Gastrocnemius medialis (tissue), 4 donors: ENCODE measurements at regions of chr14 and their contacts with region 1.

Region 1: GRCh38 chr14:104137297-104138097 is 890 bp upstream of the KIF26A start:
- DNase-seq: no peak
- ATAC-seq: peak; percentile 74 to 87
- H3K4me3 ChIP-seq: peak overlapping the region; percentile 52 to 61 (median 56)
- H3K27ac ChIP-seq: peak overlapping the region in 3 of 4 donors; percentile 44 to 59 (median 55)
- H3K4me1 ChIP-seq: peaks cover 13 to 25% of the 10 kb centered on the region in 2 donors
- H3K27me3 ChIP-seq: peaks cover 41 to 53% (median 46%) of the 10 kb centered on the region in 3 donors
- CTCF ChIP-seq: peak; percentile 67 to 91 (median 89)
- POLR2A ChIP-seq: no peak

Region 2: GRCh38 chr14:103801459-103801858 is 336.0 kb before region 1 on chr14:
- in situ Hi-C with region 1: no loop called
- intact Hi-C with region 1: no loop called
- DNase-seq: no peak
- ATAC-seq: no peak
- H3K4me3 ChIP-seq: no peak overlapping the region
- H3K27ac ChIP-seq: no peak overlapping the region
- H3K4me1 ChIP-seq: peaks cover 0 to 5% of the 10 kb centered on the region in 2 donors
- H3K27me3 ChIP-seq: no peaks in the 10 kb centered on the region
- CTCF ChIP-seq: no peak
- POLR2A ChIP-seq: no peak

Region 3: GRCh38 chr14:104171029-104171697 is 33.7 kb after region 1 on chr14:
- in situ Hi-C with region 1: no loop called
- intact Hi-C with region 1: no loop called
- DNase-seq: no peak
- ATAC-seq: no peak
- H3K4me3 ChIP-seq: no peak overlapping the region
- H3K27ac ChIP-seq: no peak overlapping the region
- H3K4me1 ChIP-seq: no peaks in the 10 kb centered on the region
- H3K27me3 ChIP-seq: peaks cover 0 to 20% (median 19%) of the 10 kb centered on the region in 3 donors
- CTCF ChIP-seq: no peak
- POLR2A ChIP-seq: no peak

Region 4: GRCh38 chr14:104563742-104564615 is 426.5 kb after region 1 on chr14:
- in situ Hi-C with region 1: loop called in 3 of 4 experiments (anchors 25 kb)
- intact Hi-C with region 1: loop called (anchors 1 kb)
- DNase-seq: peak in 1 of 2 donors; percentile 37
- ATAC-seq: peak; percentile 62 to 78
- H3K4me3 ChIP-seq: no peak overlapping the region
- H3K27ac ChIP-seq: no peak overlapping the region
- H3K4me1 ChIP-seq: no peaks in the 10 kb centered on the region
- H3K27me3 ChIP-seq: peaks cover 2 to 17% (median 5%) of the 10 kb centered on the region in 3 donors
- CTCF ChIP-seq: peak; percentile 63 to 89 (median 81)
- POLR2A ChIP-seq: no peak

Region 5: GRCh38 chr14:104639889-104640548 is 502.5 kb after region 1 on chr14:
- in situ Hi-C with region 1: loop called in 1 of 4 experiments (anchors 25 kb)
- intact Hi-C with region 1: loop called (anchors 1 kb)
- DNase-seq: no peak
- ATAC-seq: peak; percentile 66 to 76
- H3K4me3 ChIP-seq: no peak overlapping the region
- H3K27ac ChIP-seq: no peak overlapping the region
- H3K4me1 ChIP-seq: no peaks in the 10 kb centered on the region
- H3K27me3 ChIP-seq: peaks cover 4 to 15% (median 9%) of the 10 kb centered on the region in 3 donors
- CTCF ChIP-seq: peak; percentile 70 to 90 (median 79)
- POLR2A ChIP-seq: no peak